Activated CD4-positive, alpha-beta T cell treated with anti-CD3 and anti-CD28 coated beads, Interleukin-2, amount 10 ng/mL, durations not matched to agents 24 days and 14 days (primary cell): ENCODE measurements at regions of chr13 and their contacts with region 1.

Region 1: DNA sequence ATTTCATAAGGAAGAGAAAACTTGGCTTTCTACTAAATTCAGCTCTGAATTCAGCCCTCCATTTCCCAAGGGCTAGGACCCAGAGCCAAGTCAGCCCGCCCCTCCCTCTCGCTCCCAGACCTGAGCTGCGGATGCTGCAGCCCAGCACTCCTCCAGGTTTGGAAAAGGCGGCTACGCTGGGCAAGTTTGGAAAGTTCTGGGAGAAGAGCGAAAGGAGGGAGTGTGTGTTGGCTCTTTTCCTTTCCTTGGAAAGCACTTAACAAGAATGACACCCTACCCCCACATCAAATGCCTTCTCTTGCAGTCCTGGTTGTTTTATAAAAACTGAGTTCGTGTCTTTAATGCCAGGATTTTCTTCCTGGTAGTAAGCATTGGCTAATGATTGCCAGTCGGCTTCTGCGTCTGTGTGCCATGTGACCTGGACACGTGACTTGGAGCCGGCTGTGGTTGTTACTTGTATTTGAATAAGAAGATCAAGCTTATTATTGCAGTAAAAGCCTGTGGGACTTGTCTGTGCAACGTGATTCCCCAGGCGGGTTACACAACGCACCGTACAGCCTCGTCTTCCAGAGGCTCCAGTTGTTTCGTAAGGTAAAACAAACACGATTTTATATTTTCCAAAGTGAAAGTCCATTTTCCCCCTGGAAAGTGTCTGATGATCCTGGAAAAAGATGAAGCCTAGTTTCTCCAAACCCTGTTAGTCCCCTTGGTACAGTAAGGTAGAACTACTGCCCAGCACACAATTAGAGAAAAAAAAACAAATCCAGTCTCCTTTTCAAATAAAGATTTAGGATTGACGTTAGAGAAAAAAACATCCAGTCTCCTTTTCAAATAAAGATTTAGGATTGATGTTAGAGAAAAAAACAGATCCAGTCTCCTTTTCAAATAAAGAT is 26.9 kb upstream of the UBE2L5 start:
- DNase-seq: peak; percentile 89
- H3K4me3 Mint-ChIP-seq: peak overlapping the region; percentile 81
- H3K27ac Mint-ChIP-seq: peak overlapping the region; percentile 96
- H3K4me1 Mint-ChIP-seq: peaks cover 35% of the 10 kb centered on the region
- H3K27me3 Mint-ChIP-seq: no peaks in the 10 kb centered on the region

Region 2: GRCh38 chr13:30408319-30409101 is 13.1 kb after region 1 on chr13:
- intact Hi-C with region 1: loop called (anchors 1 kb)
- DNase-seq: peak; percentile 97
- H3K4me3 Mint-ChIP-seq: peak overlapping the region; percentile 73
- H3K27ac Mint-ChIP-seq: peak overlapping the region; percentile 80
- H3K4me1 Mint-ChIP-seq: peaks cover 23% of the 10 kb centered on the region
- H3K27me3 Mint-ChIP-seq: peaks cover 4% of the 10 kb centered on the region

Region 3: GRCh38 chr13:30422054-30422839 is 26.8 kb after region 1 on chr13 and contains the start of gene UBE2L5:
- intact Hi-C with region 1: loop called (anchors 2 kb)
- DNase-seq: peak; percentile 95
- H3K4me3 Mint-ChIP-seq: peak within 1 kb of the TSS; percentile 89
- H3K27ac Mint-ChIP-seq: peak within 1 kb of the TSS; percentile 86
- H3K4me1 Mint-ChIP-seq: peaks cover 26% of the 10 kb centered on the region
- H3K27me3 Mint-ChIP-seq: no peaks in the 10 kb centered on the region
- total RNA-seq, gene UBE2L5: not detected in 2 replicates

Region 4: DNA sequence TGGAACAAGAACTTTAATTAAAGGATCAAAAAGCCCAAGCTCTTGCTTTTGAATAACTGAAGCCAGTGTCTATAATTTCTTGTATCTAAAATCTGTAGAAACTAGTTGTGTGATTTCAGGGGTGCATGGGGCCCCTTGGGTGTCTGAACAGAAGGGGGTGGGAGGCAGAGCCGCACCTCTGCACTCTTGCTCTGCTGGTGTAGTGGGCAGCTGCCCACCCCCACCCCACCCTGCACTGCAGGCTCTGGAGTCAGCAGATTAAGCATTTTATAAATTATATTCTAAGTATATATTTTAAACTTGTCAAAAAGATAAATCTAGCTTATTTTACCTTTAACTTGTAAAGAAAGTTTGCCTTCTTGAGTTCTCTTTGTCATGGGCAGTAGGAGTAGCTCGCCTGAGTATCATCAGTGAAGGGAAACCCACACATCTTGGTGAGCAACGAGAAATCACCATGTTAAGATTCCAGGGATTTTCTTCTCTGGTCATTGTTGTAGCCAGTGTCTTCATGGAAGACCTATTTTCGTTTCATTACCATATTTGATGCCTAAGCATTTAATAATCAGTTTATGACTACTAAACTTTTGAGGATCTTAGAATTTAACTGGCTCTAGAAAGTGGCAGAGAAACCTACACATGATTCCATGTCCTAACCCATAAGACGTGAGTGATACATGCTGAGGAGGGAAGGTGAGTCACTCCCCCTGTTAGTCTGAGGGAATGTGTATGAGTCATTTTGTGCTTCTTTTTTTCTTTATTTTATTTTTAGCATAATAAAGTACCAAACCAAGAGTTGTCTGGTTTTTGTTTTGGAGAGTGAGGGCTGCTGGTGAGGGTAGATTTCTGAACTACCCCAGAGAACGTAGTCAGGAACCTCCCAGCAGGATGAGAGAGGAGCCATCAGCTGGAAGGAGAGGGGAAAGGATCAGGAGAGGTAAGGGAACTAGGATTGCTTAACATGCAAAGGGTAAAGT is 34.6 kb after region 1 on chr13:
- intact Hi-C with region 1: loop called (anchors 1 kb)
- DNase-seq: no peak
- H3K4me3 Mint-ChIP-seq: peak overlapping the region; percentile 63
- H3K27ac Mint-ChIP-seq: peak overlapping the region; percentile 91
- H3K4me1 Mint-ChIP-seq: peaks cover 28% of the 10 kb centered on the region
- H3K27me3 Mint-ChIP-seq: no peaks in the 10 kb centered on the region